Aorta (tissue), 5 donors: ENCODE measurements at regions of chr18 and their contacts with region 1.

Region 1: DNA sequence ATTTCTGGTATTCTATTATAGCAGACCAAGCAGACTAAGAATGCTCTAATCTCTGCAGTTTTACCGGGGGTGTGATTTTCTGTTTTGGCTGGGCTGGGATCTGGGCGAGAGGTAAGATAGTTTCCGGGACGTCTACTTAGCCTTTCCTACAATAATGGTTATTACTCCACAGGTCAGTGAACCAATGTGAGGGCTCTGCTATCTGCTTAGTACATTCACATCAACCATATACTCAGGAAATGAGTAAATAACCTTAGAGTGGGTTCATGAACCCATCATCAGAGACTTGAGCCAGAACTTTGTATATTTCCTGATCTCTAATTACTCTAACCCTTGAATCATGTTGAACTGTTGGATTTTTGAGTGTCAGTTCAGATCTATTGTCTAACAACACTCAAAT is 90.1 kb upstream of the NOL4 start:
- DNase-seq: no peak
- ATAC-seq: no peak
- H3K4me3 ChIP-seq: no peak overlapping the region
- H3K27ac ChIP-seq: no peak overlapping the region
- H3K4me1 ChIP-seq: no peaks in the 10 kb centered on the region
- H3K27me3 ChIP-seq: no peaks in the 10 kb centered on the region

Region 2: GRCh38 chr18:34108206-34108605 is 206.6 kb before region 1 on chr18:
- intact Hi-C with region 1: loop called in 1 of 2 experiments (anchors 5 kb)
- DNase-seq: no peak
- ATAC-seq: no peak
- H3K4me3 ChIP-seq: no peak overlapping the region
- H3K27ac ChIP-seq: no peak overlapping the region
- H3K4me1 ChIP-seq: no peaks in the 10 kb centered on the region
- H3K27me3 ChIP-seq: no peaks in the 10 kb centered on the region